Right lobe of liver (tissue), 6 donors: ENCODE measurements at regions of chr18 and their contacts with region 1.

Region 1: DNA sequence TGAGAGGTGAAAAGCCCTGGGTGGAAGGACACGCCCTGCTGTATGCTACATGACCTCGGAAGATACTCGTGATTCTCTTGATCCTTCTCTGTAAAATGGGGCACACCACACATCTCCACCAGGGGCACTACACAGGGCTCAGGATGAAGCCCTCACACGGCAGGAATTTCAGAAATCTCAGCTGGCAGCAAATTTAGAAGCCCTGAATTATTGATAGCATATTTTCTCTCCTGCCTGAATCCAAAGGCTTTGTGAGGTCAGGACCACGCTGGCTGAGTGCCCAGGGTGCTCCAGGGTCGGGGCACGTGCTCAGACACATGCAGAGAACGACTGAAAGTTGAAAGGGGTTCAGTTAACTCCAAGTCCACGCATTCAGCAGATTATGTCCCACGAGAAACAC is 42.1 kb upstream of the GALR1 start:
- DNase-seq: peak; percentile 60 to 73 (median 71)
- ATAC-seq: peak; percentile 76 to 81 (median 76)
- H3K4me3 ChIP-seq: no peak overlapping the region
- H3K27ac ChIP-seq: peak overlapping the region; percentile 22 to 61 (median 33)
- H3K4me1 ChIP-seq: peaks cover 0 to 21% (median 8%) of the 10 kb centered on the region in 4 donors
- H3K27me3 ChIP-seq: no peaks in the 10 kb centered on the region
- CTCF ChIP-seq: peak; percentile 62 to 67 (median 65)
- POLR2A ChIP-seq: no peak

Region 2: GRCh38 chr18:77000527-77000926 is 207.0 kb before region 1 on chr18:
- intact Hi-C with region 1: loop called (anchors 5 kb)
- DNase-seq: peak in 2 of 3 donors; percentile 62 to 63
- ATAC-seq: peak; percentile 74 to 89 (median 84)
- H3K4me3 ChIP-seq: no peak overlapping the region
- H3K27ac ChIP-seq: no peak overlapping the region
- H3K4me1 ChIP-seq: no peaks in the 10 kb centered on the region
- H3K27me3 ChIP-seq: no peaks in the 10 kb centered on the region
- CTCF ChIP-seq: peak; percentile 88 to 97 (median 96)
- POLR2A ChIP-seq: no peak

Region 3: DNA sequence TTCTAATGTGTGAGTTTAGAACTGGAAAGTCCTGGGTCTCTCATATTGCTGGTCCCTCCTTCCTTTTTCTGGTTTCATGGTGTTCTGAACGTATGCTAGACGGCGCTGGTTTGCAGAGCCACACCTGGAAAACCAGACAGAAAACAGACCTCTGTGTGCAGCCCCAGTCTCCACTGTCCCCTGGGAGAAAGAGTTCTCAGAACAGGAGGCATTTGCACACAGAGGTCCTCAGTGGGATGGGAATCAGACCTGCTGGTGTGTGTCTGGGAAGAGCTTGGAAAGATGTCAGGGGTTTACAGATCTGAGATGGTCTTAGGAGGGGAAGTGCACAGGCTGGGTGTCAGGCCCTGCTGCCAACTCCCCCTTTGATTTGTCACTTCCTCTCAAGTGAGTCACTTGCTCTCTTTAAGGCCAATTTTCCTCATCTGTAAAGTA is 60.1 kb before region 1 on chr18:
- intact Hi-C with region 1: loop called (anchors 10 kb)
- DNase-seq: no peak
- ATAC-seq: peak in 2 of 4 donors; percentile 29 to 60
- H3K4me3 ChIP-seq: no peak overlapping the region
- H3K27ac ChIP-seq: no peak overlapping the region
- H3K4me1 ChIP-seq: peaks cover 0 to 18% (median 3%) of the 10 kb centered on the region in 4 donors
- H3K27me3 ChIP-seq: no peaks in the 10 kb centered on the region
- CTCF ChIP-seq: no peak
- POLR2A ChIP-seq: no peak